Activated CD8-positive, alpha-beta T cell treated with anti-CD3 and anti-CD28 coated beads, Interleukin-2, amount 10 ng/mL, durations not matched to agents 7 days and 5 days (primary cell): ENCODE measurements at regions of chr6 and their contacts with region 1.

Region 1: GRCh38 chr6:36123257-36124139 is 6.8 kb upstream of the MAPK13 start:
- DNase-seq: peak; percentile 95
- ATAC-seq: peak; percentile 80
- H3K4me3 Mint-ChIP-seq: no peak overlapping the region
- H3K27ac Mint-ChIP-seq: peak overlapping the region; percentile 98
- H3K4me1 Mint-ChIP-seq: peaks cover 91% of the 10 kb centered on the region
- H3K27me3 Mint-ChIP-seq: no peaks in the 10 kb centered on the region

Region 2: DNA sequence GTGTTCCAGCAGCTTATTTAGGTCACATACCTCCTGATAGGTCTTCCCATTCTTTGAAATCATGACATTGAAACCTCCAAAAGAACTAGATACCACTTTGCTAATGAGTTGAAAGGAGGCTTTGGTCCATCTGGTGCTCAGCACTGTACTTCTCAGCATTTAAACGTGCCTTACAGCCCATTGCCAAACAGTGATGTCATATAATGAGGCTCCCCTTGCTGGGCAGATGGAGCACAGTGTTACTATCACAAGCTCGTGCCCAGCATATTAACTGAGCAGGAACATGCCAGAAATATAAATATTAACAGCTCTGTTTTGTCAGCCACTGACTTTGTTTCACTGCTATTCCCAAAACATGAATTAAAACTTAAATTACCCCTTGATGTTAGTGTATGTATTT is 18.7 kb before region 1 on chr6:
- CTCF ChIA-PET with region 1: interaction called, 26 read pairs
- POLR2A ChIA-PET with region 1: interaction called, 20 read pairs
- DNase-seq: no peak
- ATAC-seq: no peak
- H3K4me3 Mint-ChIP-seq: no peak overlapping the region
- H3K27ac Mint-ChIP-seq: no peak overlapping the region
- H3K4me1 Mint-ChIP-seq: peaks cover 35% of the 10 kb centered on the region
- H3K27me3 Mint-ChIP-seq: no peaks in the 10 kb centered on the region

Region 3: DNA sequence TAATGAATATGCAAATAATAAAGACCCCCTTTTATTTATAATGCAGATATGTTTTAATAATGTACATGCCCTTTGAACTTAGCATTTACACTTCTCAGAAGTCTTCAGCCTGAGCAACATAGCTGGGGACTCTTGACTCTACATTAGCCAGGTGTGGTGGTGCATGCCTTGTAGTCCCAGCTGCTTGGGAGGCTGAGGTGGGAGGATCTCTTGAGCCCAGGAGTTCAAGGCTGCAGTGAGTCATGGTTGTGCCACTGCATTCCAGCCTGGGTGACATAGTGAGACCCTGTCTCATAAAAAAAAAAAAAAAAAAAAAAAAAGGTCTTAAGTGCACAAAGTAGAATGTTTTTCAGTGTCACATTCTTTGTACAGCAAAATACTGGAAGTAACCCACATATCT is 10.4 kb before region 1 on chr6:
- CTCF ChIA-PET with region 1: interaction called, 20 read pairs
- POLR2A ChIA-PET with region 1: interaction called, 20 read pairs
- DNase-seq: no peak
- ATAC-seq: no peak
- H3K4me3 Mint-ChIP-seq: no peak overlapping the region
- H3K27ac Mint-ChIP-seq: peak overlapping the region; percentile 93
- H3K4me1 Mint-ChIP-seq: peaks cover 76% of the 10 kb centered on the region
- H3K27me3 Mint-ChIP-seq: no peaks in the 10 kb centered on the region

Region 4: DNA sequence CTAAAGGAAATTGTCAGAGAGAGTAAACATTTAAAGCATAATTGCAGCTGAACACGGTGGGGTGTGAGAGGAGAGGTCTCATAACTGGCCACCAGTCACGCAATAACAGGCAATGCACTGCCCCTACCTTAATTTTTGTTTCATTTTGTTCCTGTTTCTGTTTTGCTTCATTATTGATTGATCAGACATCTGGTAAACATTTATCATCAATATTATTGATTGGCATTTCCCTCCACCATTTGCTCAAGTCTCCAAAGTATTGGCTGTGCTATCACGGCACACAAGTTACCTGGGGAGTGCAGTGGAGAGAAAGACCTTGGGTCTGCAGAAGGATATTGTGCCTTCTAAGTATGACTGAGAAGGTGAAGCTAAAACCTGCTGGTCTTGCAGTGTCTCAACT is 37.5 kb after region 1 on chr6:
- CTCF ChIA-PET with region 1: no interaction called
- POLR2A ChIA-PET with region 1: no interaction called
- DNase-seq: peak; percentile 9
- ATAC-seq: no peak
- H3K4me3 Mint-ChIP-seq: no peak overlapping the region
- H3K27ac Mint-ChIP-seq: no peak overlapping the region
- H3K4me1 Mint-ChIP-seq: no peaks in the 10 kb centered on the region
- H3K27me3 Mint-ChIP-seq: no peaks in the 10 kb centered on the region

Region 5: DNA sequence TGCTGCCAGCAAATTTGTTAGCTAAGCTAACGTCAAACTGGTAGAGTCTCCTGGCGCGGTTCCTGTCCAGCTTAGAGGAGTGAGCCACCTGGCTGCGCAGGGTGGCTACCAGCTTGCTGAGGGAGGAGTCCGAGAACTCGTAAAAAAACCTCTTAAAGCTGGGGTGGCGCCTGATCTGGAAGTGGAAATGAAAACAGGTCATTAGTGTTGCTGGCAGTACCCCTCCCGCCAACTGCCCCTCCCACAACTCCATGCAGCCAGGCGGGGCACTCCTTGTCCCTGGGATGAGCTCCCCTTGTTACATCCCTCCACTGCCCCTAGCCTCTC is 195.9 kb after region 1 on chr6:
- CTCF ChIA-PET with region 1: no interaction called
- POLR2A ChIA-PET with region 1: no interaction called
- DNase-seq: no peak
- ATAC-seq: no peak
- H3K4me3 Mint-ChIP-seq: no peak overlapping the region
- H3K27ac Mint-ChIP-seq: no peak overlapping the region
- H3K4me1 Mint-ChIP-seq: no peaks in the 10 kb centered on the region
- H3K27me3 Mint-ChIP-seq: peaks cover 22% of the 10 kb centered on the region